Psoas muscle (tissue), 8 donors: ENCODE measurements at regions of chr2 and their contacts with region 1.

Region 1: DNA sequence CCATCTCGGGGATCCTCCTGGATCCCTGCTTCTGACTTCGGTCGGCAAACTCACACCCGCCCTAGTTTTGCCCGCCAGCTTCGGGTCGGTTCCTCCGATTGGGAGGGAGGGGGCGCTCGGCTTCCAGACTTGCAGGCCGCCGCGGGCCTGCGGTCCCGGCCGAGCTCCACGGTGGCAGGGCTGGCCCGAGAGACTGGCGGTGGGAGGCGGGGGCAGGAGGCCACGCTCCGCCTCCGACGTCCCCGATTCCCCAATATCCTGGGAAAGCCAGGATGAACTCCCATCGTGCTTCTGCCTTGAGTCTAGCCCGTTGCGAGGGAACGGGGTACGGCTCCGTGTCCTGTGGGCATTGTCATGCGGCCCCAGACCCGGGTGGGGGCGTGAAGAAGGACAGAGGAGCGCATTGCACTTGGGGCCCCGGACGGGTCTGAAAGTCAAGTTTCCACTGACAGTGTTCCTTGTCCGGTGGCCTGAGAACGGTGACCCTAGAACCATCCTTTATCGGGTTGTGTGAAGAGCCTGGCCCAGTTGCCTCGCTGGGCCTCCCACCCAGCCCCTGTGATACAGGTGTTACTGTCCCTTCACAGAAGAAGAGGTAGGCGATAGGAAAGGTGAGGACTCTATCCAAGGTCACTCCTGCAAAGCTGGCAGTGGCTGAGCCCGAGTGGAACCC is 2.4 kb upstream of the INHBB start:
- DNase-seq: peak; percentile 90 to 95
- ATAC-seq: peak; percentile 86 to 91 (median 89)
- H3K4me3 ChIP-seq: peak overlapping the region; percentile 72
- H3K27ac ChIP-seq: no peak overlapping the region
- H3K4me1 ChIP-seq: peaks cover 19% of the 10 kb centered on the region
- H3K27me3 ChIP-seq: peaks cover 0 to 30% (median 7%) of the 10 kb centered on the region in 3 donors
- CTCF ChIP-seq: peak; percentile 90

Region 2: DNA sequence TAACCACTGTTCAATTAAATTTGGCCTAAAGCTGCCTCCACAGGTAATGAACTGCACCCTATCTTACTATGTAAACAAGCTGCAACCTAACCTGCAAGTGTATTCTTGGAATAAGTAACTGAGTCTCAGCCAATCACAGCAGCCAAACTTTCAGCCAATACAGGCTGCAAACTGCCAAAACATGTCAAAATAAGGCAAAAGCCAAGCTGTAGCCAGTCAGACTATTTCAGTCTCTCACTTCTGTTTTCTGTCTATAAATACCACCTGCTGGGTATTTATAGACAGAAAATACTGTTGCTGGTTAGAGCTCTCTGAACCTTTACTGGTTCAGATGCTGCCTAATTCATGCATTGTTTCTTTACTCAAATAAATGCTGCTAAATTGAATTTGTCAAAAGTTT is 991.2 kb before region 1 on chr2:
- intact Hi-C with region 1: no loop called
- DNase-seq: no peak
- ATAC-seq: peak; percentile 63 to 91 (median 86)
- H3K4me3 ChIP-seq: no peak overlapping the region
- H3K27ac ChIP-seq: peak overlapping the region; percentile 46
- H3K4me1 ChIP-seq: peaks cover 29% of the 10 kb centered on the region
- H3K27me3 ChIP-seq: no peaks in the 10 kb centered on the region
- CTCF ChIP-seq: no peak

Region 3: GRCh38 chr2:120373424-120373823 is 29.9 kb after region 1 on chr2:
- intact Hi-C with region 1: no loop called
- DNase-seq: peak in 1 of 2 donors; percentile 26
- ATAC-seq: no peak
- H3K4me3 ChIP-seq: no peak overlapping the region
- H3K27ac ChIP-seq: no peak overlapping the region
- H3K4me1 ChIP-seq: no peaks in the 10 kb centered on the region
- H3K27me3 ChIP-seq: no peaks in the 10 kb centered on the region
- CTCF ChIP-seq: no peak

Region 4: GRCh38 chr2:120434492-120435308 is 91.1 kb after region 1 on chr2:
- intact Hi-C with region 1: loop called in 1 of 2 experiments (anchors 5 kb)
- DNase-seq: no peak
- ATAC-seq: peak in 1 of 4 donors; percentile 20
- H3K4me3 ChIP-seq: no peak overlapping the region
- H3K27ac ChIP-seq: no peak overlapping the region
- H3K4me1 ChIP-seq: no peaks in the 10 kb centered on the region
- H3K27me3 ChIP-seq: no peaks in the 10 kb centered on the region
- CTCF ChIP-seq: no peak

Region 5: DNA sequence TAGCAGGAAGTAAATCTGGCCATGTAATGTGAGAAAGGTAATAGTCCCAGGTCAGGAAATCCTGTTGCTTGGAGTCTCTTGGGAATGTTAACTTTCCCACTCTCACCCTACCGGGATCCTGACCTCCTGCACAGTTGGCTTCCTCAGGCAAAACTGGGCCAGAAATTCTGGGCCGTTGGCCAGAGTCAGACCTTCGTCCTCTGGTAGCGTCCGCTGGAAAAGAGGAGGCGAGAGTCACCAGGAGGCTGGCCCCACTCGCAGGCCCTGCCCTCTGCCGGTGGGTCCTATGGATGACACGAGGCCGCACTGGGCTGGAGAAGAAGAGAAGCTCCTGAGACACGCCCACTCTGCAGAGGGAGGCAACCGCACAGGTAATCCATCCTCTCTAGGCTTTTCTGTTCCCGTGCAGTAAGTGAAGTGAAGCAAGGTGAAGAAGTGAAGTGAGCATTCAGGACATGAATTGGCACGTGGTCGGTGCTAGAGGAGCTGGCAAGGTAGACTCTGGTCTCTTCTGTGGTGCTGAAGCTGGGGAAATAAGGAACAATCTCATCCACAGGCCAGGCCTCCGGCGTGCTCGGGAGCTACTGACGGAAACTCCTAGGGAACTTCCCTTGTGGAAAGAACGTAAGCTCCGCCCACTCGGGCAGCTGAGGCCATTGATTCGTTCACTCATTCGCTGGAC is 209.4 kb after region 1 on chr2:
- intact Hi-C with region 1: loop called (anchors 2 to 5 kb)
- DNase-seq: peak; percentile 90 to 96
- ATAC-seq: peak; percentile 89 to 97 (median 94)
- H3K4me3 ChIP-seq: no peak overlapping the region
- H3K27ac ChIP-seq: peak overlapping the region; percentile 10
- H3K4me1 ChIP-seq: peaks cover 31% of the 10 kb centered on the region
- H3K27me3 ChIP-seq: no peaks in the 10 kb centered on the region
- CTCF ChIP-seq: peak; percentile 87

Region 6: GRCh38 chr2:120680136-120680761 is 336.7 kb after region 1 on chr2:
- intact Hi-C with region 1: loop called (anchors 1 to 2 kb)
- DNase-seq: peak; percentile 85 to 89
- ATAC-seq: peak; percentile 78 to 91 (median 86)
- H3K4me3 ChIP-seq: no peak overlapping the region
- H3K27ac ChIP-seq: no peak overlapping the region
- H3K4me1 ChIP-seq: peaks cover 3% of the 10 kb centered on the region
- H3K27me3 ChIP-seq: peaks cover 0 to 5% (median 0%) of the 10 kb centered on the region in 3 donors
- CTCF ChIP-seq: peak; percentile 45

Region 7: GRCh38 chr2:121076885-121077549 is 733.4 kb after region 1 on chr2:
- intact Hi-C with region 1: loop called in 1 of 2 experiments (anchors 5 kb)
- DNase-seq: peak; percentile 70 to 81
- ATAC-seq: peak; percentile 67 to 84 (median 75)
- H3K4me3 ChIP-seq: no peak overlapping the region
- H3K27ac ChIP-seq: no peak overlapping the region
- H3K4me1 ChIP-seq: no peaks in the 10 kb centered on the region
- H3K27me3 ChIP-seq: peaks cover 0 to 16% (median 9%) of the 10 kb centered on the region in 3 donors
- CTCF ChIP-seq: peak; percentile 89